Transverse colon (tissue), 4 donors: ENCODE measurements at regions of chr2 and their contacts with region 1.

Region 1: GRCh38 chr2:157336137-157337010 is 10.8 kb upstream of the ERMN start:
- DNase-seq: peak; percentile 40
- H3K4me3 ChIP-seq: no peak overlapping the region
- H3K27ac ChIP-seq: no peak overlapping the region
- H3K4me1 ChIP-seq: no peaks in the 10 kb centered on the region
- H3K27me3 ChIP-seq: no peaks in the 10 kb centered on the region
- CTCF ChIP-seq: peak; percentile 58 to 78 (median 63)
- EP300 ChIP-seq: no peak
- POLR2A ChIP-seq: no peak

Region 2: GRCh38 chr2:155733091-155733853 is 1603.1 kb before region 1 on chr2:
- in situ Hi-C with region 1: no loop called
- intact Hi-C with region 1: no loop called
- DNase-seq: no peak
- H3K4me3 ChIP-seq: no peak overlapping the region
- H3K27ac ChIP-seq: no peak overlapping the region
- H3K4me1 ChIP-seq: no peaks in the 10 kb centered on the region
- H3K27me3 ChIP-seq: no peaks in the 10 kb centered on the region
- CTCF ChIP-seq: no peak
- EP300 ChIP-seq: no peak
- POLR2A ChIP-seq: no peak

Region 3: GRCh38 chr2:157150747-157151146 is 185.6 kb before region 1 on chr2:
- in situ Hi-C with region 1: no loop called
- intact Hi-C with region 1: no loop called
- DNase-seq: no peak
- H3K4me3 ChIP-seq: no peak overlapping the region
- H3K27ac ChIP-seq: peak overlapping the region in 2 of 4 donors; percentile 38 to 55
- H3K4me1 ChIP-seq: peaks cover 0 to 29% (median 12%) of the 10 kb centered on the region in 4 donors
- H3K27me3 ChIP-seq: no peaks in the 10 kb centered on the region
- CTCF ChIP-seq: no peak
- EP300 ChIP-seq: no peak
- POLR2A ChIP-seq: no peak

Region 4: GRCh38 chr2:157413326-157414035 is 77.1 kb after region 1 on chr2:
- in situ Hi-C with region 1: no loop called
- intact Hi-C with region 1: no loop called
- DNase-seq: no peak
- H3K4me3 ChIP-seq: no peak overlapping the region
- H3K27ac ChIP-seq: peak overlapping the region; percentile 18 to 41 (median 35)
- H3K4me1 ChIP-seq: peaks cover 0 to 9% (median 2%) of the 10 kb centered on the region in 4 donors
- H3K27me3 ChIP-seq: no peaks in the 10 kb centered on the region
- CTCF ChIP-seq: no peak
- EP300 ChIP-seq: no peak
- POLR2A ChIP-seq: peak; percentile 40

Region 5: GRCh38 chr2:157480182-157480961 is 144.0 kb after region 1 on chr2:
- in situ Hi-C with region 1: loop called in 2 of 4 experiments (anchors 10 to 25 kb)
- intact Hi-C with region 1: no loop called
- DNase-seq: peak; percentile 21
- H3K4me3 ChIP-seq: no peak overlapping the region
- H3K27ac ChIP-seq: no peak overlapping the region
- H3K4me1 ChIP-seq: no peaks in the 10 kb centered on the region
- H3K27me3 ChIP-seq: no peaks in the 10 kb centered on the region
- CTCF ChIP-seq: no peak
- EP300 ChIP-seq: no peak
- POLR2A ChIP-seq: no peak

Region 6: DNA sequence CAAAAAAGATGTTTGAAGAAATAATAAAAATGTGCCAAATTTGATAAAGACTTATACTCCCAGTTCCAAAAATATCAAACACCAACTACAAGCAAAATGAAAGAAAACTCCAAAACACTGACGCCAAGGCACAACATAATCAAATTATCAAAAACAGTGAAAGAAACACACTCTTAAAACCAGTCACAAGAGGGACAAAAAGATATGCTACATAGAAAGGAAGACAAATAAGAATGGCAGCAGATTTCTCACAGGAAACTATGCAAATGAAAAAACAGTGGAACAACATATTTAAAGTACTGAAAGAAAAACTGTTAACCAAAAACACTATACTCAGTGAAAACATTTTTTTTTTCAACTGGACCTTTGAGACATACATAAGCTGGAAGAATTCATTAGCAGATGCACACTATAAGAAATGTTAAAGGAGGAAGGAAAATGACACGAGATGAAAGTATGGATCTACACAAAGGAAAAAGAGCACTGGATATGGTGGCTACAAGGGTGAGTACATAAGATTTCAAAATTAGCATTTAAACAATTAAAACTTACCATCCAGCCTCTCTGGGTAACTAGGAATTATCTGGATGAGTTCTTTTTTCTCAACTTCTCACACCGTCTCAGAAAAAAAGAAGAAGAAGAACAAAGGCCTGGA is 386.3 kb after region 1 on chr2:
- in situ Hi-C with region 1: no loop called
- intact Hi-C with region 1: no loop called
- DNase-seq: no peak
- H3K4me3 ChIP-seq: no peak overlapping the region
- H3K27ac ChIP-seq: no peak overlapping the region
- H3K4me1 ChIP-seq: no peaks in the 10 kb centered on the region
- H3K27me3 ChIP-seq: no peaks in the 10 kb centered on the region
- CTCF ChIP-seq: no peak
- EP300 ChIP-seq: no peak
- POLR2A ChIP-seq: no peak